ENCODE measurements at regions of chr13 and their contacts with region 1.

Region 1: GRCh38 chr13:49690992-49691886 is at the start of gene EBPL:
- DNase-seq: peak; percentile 65 to 91 (median 88)
- ATAC-seq: peak; percentile 96
- H3K4me3 ChIP-seq: peak within 1 kb of the TSS; percentile 89
- H3K4me3 Mint-ChIP-seq: peak within 1 kb of the TSS; percentile 91
- H3K27ac ChIP-seq: peak within 1 kb of the TSS; percentile 41 to 47
- H3K27ac Mint-ChIP-seq: peak within 1 kb of the TSS; percentile 62
- H3K4me1 ChIP-seq: peaks cover 15% of the 10 kb centered on the region
- H3K4me1 Mint-ChIP-seq: peaks cover 23% of the 10 kb centered on the region
- H3K27me3 ChIP-seq: no peaks in the 10 kb centered on the region
- H3K27me3 Mint-ChIP-seq: no peaks in the 10 kb centered on the region
- CTCF ChIP-seq: peak; percentile 15
- total RNA-seq, gene EBPL: 9.5 to 10.7 TPM

Region 2: DNA sequence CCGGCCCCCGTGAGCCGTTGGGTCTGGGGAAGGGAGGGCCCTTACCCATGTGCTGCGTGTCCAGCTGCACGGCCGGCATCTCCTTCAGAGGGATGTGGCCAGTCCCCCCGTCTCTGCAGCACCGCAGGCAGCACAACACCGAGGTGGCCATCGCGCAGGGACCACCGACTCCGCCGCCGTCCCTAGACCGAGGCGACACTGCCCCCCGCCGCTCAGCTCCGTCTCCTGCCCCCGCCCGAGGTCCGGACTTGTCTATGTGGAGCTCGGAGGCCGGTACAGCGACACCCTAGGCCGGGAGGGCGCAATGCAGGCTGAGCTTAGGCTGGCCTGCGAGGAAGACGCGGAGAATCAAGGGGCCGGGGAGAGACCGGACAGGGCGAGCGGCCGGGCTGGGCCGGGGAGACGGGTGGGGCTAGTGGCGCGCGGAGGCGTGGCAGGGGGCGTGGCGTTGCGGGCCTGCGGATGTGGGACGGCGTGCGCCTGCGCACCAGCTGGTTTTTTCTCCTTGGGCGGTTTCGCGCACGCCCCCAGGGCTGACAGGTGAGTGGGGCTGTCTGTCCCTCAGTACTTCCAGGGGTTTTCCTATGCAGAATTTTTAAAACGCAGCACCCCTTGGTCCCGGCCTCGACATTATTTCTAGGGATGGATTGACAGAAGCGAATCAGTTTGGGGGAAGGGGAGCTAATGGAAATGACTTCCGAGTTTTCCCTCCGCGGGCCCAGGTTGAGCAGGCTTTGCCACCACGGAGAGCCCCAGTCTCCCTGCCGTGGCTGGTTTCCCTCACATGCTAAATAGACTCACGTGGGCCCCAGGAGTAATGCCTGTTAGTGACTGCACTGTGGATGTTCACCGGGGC is 245.1 kb after region 1 on chr13 and contains the start of gene SPRYD7:
- CTCF ChIA-PET with region 1: no interaction called
- POLR2A ChIA-PET with region 1: no interaction called
- intact Hi-C with region 1: loop called in 1 of 2 experiments (anchors 2 kb)
- DNase-seq: peak; percentile 82 to 97 (median 94)
- ATAC-seq: peak; percentile 85
- H3K4me3 ChIP-seq: peak within 1 kb of the TSS; percentile 81 to 98
- H3K4me3 Mint-ChIP-seq: peak within 1 kb of the TSS; percentile 88
- H3K27ac ChIP-seq: peak within 1 kb of the TSS; percentile 37 to 44
- H3K27ac Mint-ChIP-seq: peak within 1 kb of the TSS; percentile 81
- H3K4me1 ChIP-seq: peaks cover 14% of the 10 kb centered on the region
- H3K4me1 Mint-ChIP-seq: peaks cover 19% of the 10 kb centered on the region
- H3K27me3 ChIP-seq: no peaks in the 10 kb centered on the region
- H3K27me3 Mint-ChIP-seq: no peaks in the 10 kb centered on the region
- CTCF ChIP-seq: peak; percentile 62
- total RNA-seq, gene SPRYD7: 1.2 to 1.4 TPM